Activated CD4-positive, alpha-beta T cell treated with anti-CD3 and anti-CD28 coated beads, Interleukin-2, amount 10 ng/mL, durations not matched to agents 7 days and 5 days (primary cell): ENCODE measurements at regions of chr4 and their contacts with region 1.

Region 1: GRCh38 chr4:40066651-40067050 is 10.0 kb downstream of the N4BP2 start:
- DNase-seq: no peak
- H3K4me3 Mint-ChIP-seq: no peak overlapping the region
- H3K27ac Mint-ChIP-seq: peak overlapping the region; percentile 57
- H3K4me1 Mint-ChIP-seq: peaks cover 65% of the 10 kb centered on the region
- H3K27me3 Mint-ChIP-seq: no peaks in the 10 kb centered on the region

Region 2: DNA sequence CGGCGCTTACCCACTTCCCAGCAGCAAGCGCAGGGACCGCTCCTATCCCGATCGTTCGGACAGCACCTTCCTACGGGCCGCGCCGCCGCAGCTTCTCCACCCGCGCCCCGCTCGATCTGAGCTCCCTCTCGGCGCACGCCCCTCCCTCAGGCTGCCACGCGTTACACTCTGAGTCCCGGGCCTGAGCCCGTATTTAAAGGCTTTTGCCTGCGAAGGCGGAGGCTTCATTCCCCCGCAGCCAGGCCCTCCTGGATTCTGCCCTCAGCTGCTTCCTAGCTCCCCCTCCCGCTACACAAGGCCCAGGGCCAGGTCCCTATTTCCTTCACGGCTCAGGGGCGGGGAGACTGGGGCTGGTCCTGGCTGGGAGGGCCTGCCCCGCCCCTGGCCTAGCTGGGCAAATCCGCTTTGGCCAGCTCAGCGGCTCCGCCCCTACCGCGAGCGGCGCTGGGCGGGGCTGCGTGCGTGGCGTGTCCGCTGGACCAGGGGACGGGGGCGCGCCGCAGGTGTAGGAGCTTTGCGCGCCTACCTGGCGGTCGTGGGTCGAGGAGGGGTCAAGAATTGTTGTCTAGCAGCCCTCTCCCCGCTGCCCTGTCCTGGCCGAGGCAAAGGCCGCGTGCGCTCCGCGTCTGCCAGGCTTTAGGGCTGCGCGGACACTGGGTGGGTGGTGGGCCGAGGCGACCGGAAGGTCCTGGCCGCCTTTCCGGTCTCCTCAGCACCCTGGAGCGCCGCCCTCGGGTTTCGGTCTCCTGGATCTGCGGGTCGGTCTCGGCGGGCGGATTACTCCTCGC is 539.2 kb before region 1 on chr4 and contains the start of gene UGDH:
- CTCF ChIA-PET with region 1: no interaction called
- POLR2A ChIA-PET with region 1: interaction called, 10 read pairs
- DNase-seq: peak; percentile 92
- H3K4me3 Mint-ChIP-seq: peak within 1 kb of the TSS; percentile 98
- H3K27ac Mint-ChIP-seq: peak within 1 kb of the TSS; percentile 94
- H3K4me1 Mint-ChIP-seq: peaks cover 18% of the 10 kb centered on the region
- H3K27me3 Mint-ChIP-seq: no peaks in the 10 kb centered on the region
- total RNA-seq, gene UGDH: 12.3 TPM

Region 3: DNA sequence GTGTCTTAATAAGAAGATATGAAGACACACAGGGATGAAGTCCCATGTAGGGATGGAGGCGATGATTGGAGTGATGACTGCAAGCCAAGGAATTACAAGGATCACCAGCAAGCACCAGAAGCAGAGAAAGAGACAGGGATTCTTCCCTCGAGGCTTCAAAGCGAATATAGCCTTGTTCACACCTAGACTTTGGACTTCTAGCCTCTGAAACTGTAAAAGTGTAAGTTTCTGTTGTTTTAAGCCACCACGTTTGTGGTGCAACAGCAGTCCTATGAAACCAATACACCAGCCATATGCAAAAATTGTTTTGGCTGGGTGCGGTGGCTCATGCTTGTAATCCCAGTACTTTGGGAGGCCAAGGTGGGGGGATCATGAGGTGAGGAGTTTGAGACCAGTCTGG is 79.2 kb before region 1 on chr4:
- CTCF ChIA-PET with region 1: no interaction called
- POLR2A ChIA-PET with region 1: no interaction called
- DNase-seq: no peak
- H3K4me3 Mint-ChIP-seq: no peak overlapping the region
- H3K27ac Mint-ChIP-seq: no peak overlapping the region
- H3K4me1 Mint-ChIP-seq: no peaks in the 10 kb centered on the region
- H3K27me3 Mint-ChIP-seq: no peaks in the 10 kb centered on the region